CD8-positive, alpha-beta T cell (primary cell): ENCODE measurements at regions of chr16 and their contacts with region 1.

Region 1: DNA sequence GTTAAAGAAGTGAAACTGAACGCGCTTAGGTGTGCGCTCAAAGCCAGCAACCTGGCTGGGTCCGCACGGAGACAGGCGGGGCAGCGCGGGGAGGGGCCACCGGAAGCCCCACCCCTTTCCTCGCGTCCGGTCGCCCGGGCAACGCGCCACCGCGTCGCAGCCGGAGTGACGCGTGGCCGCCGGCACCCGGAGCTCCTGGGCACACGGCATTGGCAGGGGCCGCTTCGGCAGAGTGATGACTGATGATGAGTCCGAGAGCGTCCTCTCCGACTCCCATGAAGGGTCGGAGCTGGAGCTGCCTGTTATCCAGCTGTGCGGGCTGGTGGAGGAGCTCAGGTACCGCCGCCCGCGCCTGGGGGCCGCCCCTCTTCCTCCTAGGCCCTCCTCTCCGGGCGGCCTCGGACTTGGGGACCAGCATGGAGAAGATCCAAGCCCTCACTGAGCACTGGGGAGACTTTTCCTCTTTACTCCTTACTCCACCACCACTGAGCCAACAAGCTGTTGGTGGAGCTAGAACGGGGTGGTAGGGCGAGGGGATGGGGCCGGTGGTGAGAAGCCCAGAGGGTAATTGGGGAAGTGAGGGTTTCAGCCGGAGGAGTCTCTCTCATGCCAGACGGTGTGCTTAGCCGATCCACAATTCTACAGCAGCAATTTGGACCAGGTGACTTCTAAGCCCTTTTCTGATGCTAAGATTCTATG is 44.9 kb downstream of the PRSS54 start:
- DNase-seq: peak; percentile 70 to 91 (median 81)
- ATAC-seq: peak; percentile 98
- H3K4me3 ChIP-seq: peak overlapping the region; percentile 64 to 75
- H3K4me3 Mint-ChIP-seq: peak overlapping the region; percentile 83
- H3K27ac ChIP-seq: peak overlapping the region in 1 of 2 experiments; percentile 21
- H3K27ac Mint-ChIP-seq: no peak overlapping the region
- H3K4me1 ChIP-seq: peaks cover 10% of the 10 kb centered on the region
- H3K4me1 Mint-ChIP-seq: peaks cover 9% of the 10 kb centered on the region
- H3K27me3 ChIP-seq: peaks cover 0 to 6% of the 10 kb centered on the region in 2 experiments
- H3K27me3 Mint-ChIP-seq: peaks cover 2% of the 10 kb centered on the region
- CTCF ChIP-seq: no peak

Region 2: DNA sequence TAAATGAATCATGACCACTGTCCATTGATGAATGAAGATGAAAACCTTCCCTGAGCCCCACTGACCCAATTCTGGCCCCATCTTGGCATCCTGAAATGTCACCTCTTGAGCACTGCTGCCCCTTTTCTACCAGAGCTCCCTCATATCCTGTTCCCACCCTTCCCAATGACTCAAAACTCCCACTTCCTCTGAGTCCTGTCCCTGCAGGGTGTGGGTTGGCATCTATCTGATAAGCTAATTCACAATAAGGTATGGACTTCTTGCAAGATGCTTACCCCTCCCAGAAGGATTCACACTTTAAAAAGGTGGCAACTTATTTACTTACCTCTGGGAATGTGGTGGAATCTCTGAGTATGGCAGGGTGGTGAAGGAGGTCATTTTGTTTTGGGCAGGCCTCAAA is 38.7 kb before region 1 on chr16:
- CTCF ChIA-PET with region 1: no interaction called
- POLR2A ChIA-PET with region 1: no interaction called
- intact Hi-C with region 1: no loop called
- DNase-seq: no peak
- ATAC-seq: no peak
- H3K4me3 ChIP-seq: no peak overlapping the region
- H3K4me3 Mint-ChIP-seq: no peak overlapping the region
- H3K27ac ChIP-seq: no peak overlapping the region
- H3K27ac Mint-ChIP-seq: no peak overlapping the region
- H3K4me1 ChIP-seq: no peaks in the 10 kb centered on the region
- H3K4me1 Mint-ChIP-seq: no peaks in the 10 kb centered on the region
- H3K27me3 ChIP-seq: no peaks in the 10 kb centered on the region
- H3K27me3 Mint-ChIP-seq: peaks cover 35% of the 10 kb centered on the region
- CTCF ChIP-seq: no peak

Region 3: DNA sequence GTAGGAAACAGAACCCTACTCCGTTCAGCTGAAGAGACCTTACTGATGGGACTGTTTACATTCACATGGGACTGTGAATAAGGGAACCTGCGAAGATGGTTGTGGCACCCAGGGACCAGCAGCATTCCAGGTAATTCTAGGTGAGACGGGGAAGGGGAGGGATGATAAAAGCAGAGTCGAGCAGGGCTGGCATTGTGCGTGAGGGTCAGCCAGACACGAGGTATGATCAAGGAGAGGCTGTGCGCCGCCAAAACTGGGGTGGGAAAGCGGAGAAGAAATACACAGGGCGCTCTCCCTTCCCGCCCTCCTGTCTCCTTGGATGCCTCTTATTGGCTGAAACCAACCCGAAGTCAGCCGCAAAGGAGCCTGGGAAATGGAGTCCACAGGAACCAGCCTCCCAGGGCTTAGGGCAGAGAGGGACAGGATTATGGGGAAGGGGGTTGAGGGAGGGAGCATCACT is 13.7 kb before region 1 on chr16:
- CTCF ChIA-PET with region 1: interaction called, 3 read pairs
- POLR2A ChIA-PET with region 1: no interaction called
- intact Hi-C with region 1: loop called in 1 of 2 experiments (anchors 1 kb)
- DNase-seq: peak; percentile 10 to 76 (median 64)
- ATAC-seq: peak; percentile 94
- H3K4me3 ChIP-seq: peak overlapping the region; percentile 47 to 56
- H3K4me3 Mint-ChIP-seq: peak overlapping the region; percentile 80
- H3K27ac ChIP-seq: no peak overlapping the region
- H3K27ac Mint-ChIP-seq: no peak overlapping the region
- H3K4me1 ChIP-seq: no peaks in the 10 kb centered on the region
- H3K4me1 Mint-ChIP-seq: peaks cover 9% of the 10 kb centered on the region
- H3K27me3 ChIP-seq: peaks cover 0 to 5% of the 10 kb centered on the region in 2 experiments
- H3K27me3 Mint-ChIP-seq: peaks cover 14% of the 10 kb centered on the region
- CTCF ChIP-seq: no peak

Region 4: GRCh38 chr16:58261263-58261662 is 11.3 kb after region 1 on chr16:
- CTCF ChIA-PET with region 1: interaction called, 11 read pairs
- POLR2A ChIA-PET with region 1: interaction called, 3 read pairs
- intact Hi-C with region 1: no loop called
- DNase-seq: no peak
- ATAC-seq: no peak
- H3K4me3 ChIP-seq: no peak overlapping the region
- H3K4me3 Mint-ChIP-seq: no peak overlapping the region
- H3K27ac ChIP-seq: no peak overlapping the region
- H3K27ac Mint-ChIP-seq: no peak overlapping the region
- H3K4me1 ChIP-seq: no peaks in the 10 kb centered on the region
- H3K4me1 Mint-ChIP-seq: peaks cover 2% of the 10 kb centered on the region
- H3K27me3 ChIP-seq: no peaks in the 10 kb centered on the region
- H3K27me3 Mint-ChIP-seq: peaks cover 2% of the 10 kb centered on the region
- CTCF ChIP-seq: no peak

Region 5: DNA sequence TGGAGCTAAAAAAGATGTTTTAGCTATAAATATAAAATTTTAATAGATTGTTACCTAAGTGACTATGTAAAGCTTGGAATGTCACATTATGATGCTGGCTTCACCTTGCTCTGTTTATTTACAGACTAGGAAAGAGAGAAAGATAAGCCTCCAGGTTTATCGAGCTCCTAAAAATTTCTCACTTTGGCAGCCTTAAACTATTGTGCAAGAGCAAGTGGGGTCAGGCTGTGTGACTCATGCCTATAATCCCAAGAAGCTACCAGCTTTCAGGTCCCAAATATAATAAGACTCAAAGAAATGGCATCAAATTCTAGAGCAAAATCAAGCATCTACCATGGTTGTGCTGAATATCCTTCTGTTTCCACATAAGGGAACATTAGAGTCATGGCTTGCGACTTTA is 79.2 kb after region 1 on chr16:
- CTCF ChIA-PET with region 1: no interaction called
- POLR2A ChIA-PET with region 1: no interaction called
- intact Hi-C with region 1: no loop called
- DNase-seq: no peak
- ATAC-seq: no peak
- H3K4me3 ChIP-seq: no peak overlapping the region
- H3K4me3 Mint-ChIP-seq: no peak overlapping the region
- H3K27ac ChIP-seq: no peak overlapping the region
- H3K27ac Mint-ChIP-seq: no peak overlapping the region
- H3K4me1 ChIP-seq: no peaks in the 10 kb centered on the region
- H3K4me1 Mint-ChIP-seq: no peaks in the 10 kb centered on the region
- H3K27me3 ChIP-seq: no peaks in the 10 kb centered on the region
- H3K27me3 Mint-ChIP-seq: peaks cover 25% of the 10 kb centered on the region
- CTCF ChIP-seq: no peak